Activated naive CD4-positive, alpha-beta T cell treated with anti-CD3 and anti-CD28 coated beads for 36 hours (primary cell): ENCODE measurements at regions of chr5 and their contacts with region 1.

Region 1: DNA sequence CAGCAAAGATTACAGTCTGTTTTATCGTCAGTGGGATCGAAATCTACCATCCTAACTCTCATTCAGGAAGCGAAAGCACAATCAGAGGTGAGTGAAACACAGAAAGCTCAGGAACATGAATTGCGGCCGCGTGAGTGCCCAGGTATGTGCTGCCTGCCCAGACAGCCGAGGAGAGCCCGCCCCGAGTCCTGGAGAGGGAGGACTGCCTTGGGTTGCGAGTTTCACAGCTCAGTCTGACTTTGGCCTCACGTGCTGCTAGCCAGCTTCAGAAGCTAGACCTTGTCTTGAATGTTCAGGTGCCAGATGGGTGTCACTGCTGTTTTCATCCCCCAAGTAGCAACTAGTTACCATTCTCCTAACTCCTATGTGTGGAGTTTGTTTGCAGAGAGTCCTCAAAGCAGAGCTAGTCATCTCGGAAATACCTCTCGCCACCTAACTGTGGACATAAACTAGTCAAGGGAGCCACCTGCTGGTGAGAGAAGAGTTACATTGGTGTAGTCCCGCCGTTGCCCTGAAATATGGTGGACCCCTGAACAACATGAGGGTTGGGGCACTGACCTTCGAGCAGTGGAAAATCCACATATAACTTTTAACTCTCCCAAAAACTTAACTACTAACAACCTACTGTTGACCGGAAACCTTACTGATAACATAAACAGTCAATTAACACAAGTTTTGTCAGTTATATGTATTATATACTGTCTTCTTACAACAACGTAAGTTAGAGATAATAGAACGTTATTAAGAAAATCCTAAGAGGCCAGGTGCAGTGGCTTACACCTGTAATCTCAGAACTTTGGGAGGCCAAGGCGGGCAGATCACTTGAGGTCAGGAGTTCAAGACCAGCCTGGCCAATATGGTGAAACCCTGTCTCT is 80.9 kb downstream of the GOLPH3 start:
- DNase-seq: peak; percentile 87
- H3K4me3 Mint-ChIP-seq: no peak overlapping the region
- H3K27ac Mint-ChIP-seq: no peak overlapping the region
- H3K4me1 Mint-ChIP-seq: peaks cover 6% of the 10 kb centered on the region
- H3K27me3 Mint-ChIP-seq: no peaks in the 10 kb centered on the region

Region 2: GRCh38 chr5:31581498-31582099 is 511.6 kb before region 1 on chr5:
- CTCF ChIA-PET with region 1: interaction called, 7 read pairs
- intact Hi-C with region 1: loop called (anchors 1 kb)
- DNase-seq: peak; percentile 8
- H3K4me3 Mint-ChIP-seq: no peak overlapping the region
- H3K27ac Mint-ChIP-seq: no peak overlapping the region
- H3K4me1 Mint-ChIP-seq: no peaks in the 10 kb centered on the region
- H3K27me3 Mint-ChIP-seq: peaks cover 9% of the 10 kb centered on the region

Region 3: DNA sequence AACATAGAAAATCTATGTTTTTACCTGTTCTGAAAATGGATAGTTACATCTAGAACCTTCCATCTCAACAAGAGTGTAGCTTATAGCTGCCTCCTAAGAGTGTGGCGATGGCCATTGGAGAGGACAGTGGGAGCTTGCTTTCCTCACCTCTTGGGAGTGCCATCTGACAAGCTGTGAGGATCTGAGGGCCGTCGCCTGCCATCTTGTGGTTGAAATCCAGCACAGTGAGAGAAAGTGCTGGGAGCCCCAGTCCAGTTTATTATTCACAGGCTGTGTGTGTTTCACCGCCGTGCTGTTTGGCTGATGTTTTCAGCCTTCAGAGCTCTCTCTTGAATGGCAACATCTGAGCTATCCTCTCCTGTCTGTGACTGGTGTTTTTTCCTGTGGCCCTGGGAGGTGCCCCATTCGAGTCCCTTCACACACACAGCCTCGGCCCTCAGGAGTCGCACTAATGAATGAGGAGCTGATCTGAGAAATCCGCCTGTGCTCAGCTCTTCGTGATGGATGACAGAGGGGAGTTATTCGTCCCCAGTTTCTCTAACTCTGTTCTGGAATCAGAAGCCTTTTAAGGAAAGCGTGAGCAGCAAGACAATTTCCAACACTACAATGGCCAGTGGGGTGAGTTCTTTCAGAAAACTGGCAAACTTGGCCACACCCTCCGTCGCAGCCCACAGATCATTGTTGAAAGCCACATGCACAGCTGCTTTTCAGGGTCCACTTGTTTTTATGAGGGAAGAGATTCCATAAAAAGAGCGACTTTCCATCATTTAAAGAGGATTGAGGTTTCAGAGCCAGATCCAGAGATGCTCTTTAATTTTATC is 283.9 kb before region 1 on chr5:
- CTCF ChIA-PET with region 1: no interaction called
- intact Hi-C with region 1: loop called (anchors 1 kb)
- DNase-seq: peak; percentile 58
- H3K4me3 Mint-ChIP-seq: no peak overlapping the region
- H3K27ac Mint-ChIP-seq: no peak overlapping the region
- H3K4me1 Mint-ChIP-seq: no peaks in the 10 kb centered on the region
- H3K27me3 Mint-ChIP-seq: no peaks in the 10 kb centered on the region

Region 4: GRCh38 chr5:31825518-31826068 is 267.6 kb before region 1 on chr5:
- CTCF ChIA-PET with region 1: interaction called, 24 read pairs
- intact Hi-C with region 1: loop called (anchors 1 kb)
- DNase-seq: peak; percentile 73
- H3K4me3 Mint-ChIP-seq: no peak overlapping the region
- H3K27ac Mint-ChIP-seq: no peak overlapping the region
- H3K4me1 Mint-ChIP-seq: peaks cover 1% of the 10 kb centered on the region
- H3K27me3 Mint-ChIP-seq: no peaks in the 10 kb centered on the region

Region 5: GRCh38 chr5:31854181-31855133 is 238.7 kb before region 1 on chr5:
- CTCF ChIA-PET with region 1: interaction called, 3 read pairs
- intact Hi-C with region 1: loop called (anchors 1 kb)
- DNase-seq: peak; percentile 63
- H3K4me3 Mint-ChIP-seq: peak overlapping the region; percentile 79
- H3K27ac Mint-ChIP-seq: no peak overlapping the region
- H3K4me1 Mint-ChIP-seq: peaks cover 15% of the 10 kb centered on the region
- H3K27me3 Mint-ChIP-seq: peaks cover 20% of the 10 kb centered on the region

Region 6: GRCh38 chr5:32115985-32116384 is 22.8 kb after region 1 on chr5:
- CTCF ChIA-PET with region 1: no interaction called
- intact Hi-C with region 1: no loop called
- DNase-seq: no peak
- H3K4me3 Mint-ChIP-seq: no peak overlapping the region
- H3K27ac Mint-ChIP-seq: peak overlapping the region; percentile 56
- H3K4me1 Mint-ChIP-seq: peaks cover 34% of the 10 kb centered on the region
- H3K27me3 Mint-ChIP-seq: no peaks in the 10 kb centered on the region

Region 7: DNA sequence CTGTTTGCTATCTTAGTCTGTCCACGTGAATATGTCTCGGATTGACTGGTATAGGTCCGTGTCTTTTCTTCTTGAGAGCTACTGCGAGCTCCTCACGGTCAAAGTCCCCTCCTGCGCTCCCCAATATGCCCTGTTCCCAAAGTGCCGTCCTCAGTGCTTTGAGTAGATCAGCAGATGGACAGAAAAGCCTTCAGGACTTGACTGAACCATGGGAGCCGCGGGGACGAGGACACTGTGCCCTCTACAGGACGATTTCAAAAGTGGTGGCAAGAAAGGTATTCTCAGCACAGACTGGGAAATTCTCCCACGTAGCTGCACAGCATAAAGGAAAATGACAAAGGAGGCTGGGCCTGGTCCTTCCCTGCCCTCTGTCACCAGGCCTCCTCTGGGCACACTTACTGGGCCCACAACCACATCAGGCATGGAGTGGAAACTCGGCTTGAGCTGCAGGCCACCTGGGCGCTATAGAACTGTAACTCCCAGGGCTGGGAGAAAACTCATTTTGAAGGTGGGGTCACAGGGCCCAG is 236.2 kb after region 1 on chr5:
- CTCF ChIA-PET with region 1: interaction called, 3 read pairs
- intact Hi-C with region 1: loop called (anchors 5 kb)
- DNase-seq: peak; percentile 75
- H3K4me3 Mint-ChIP-seq: no peak overlapping the region
- H3K27ac Mint-ChIP-seq: no peak overlapping the region
- H3K4me1 Mint-ChIP-seq: no peaks in the 10 kb centered on the region
- H3K27me3 Mint-ChIP-seq: no peaks in the 10 kb centered on the region